ENCODE measurements at regions of chr22 and their contacts with region 1.

Region 1: GRCh38 chr22:39528681-39529486 is 3.7 kb downstream of the RPS19BP1 start:
- DNase-seq: peak; percentile 84 to 97 (median 92)
- ATAC-seq: peak; percentile 55 to 75 (median 63)
- H3K4me3 ChIP-seq: peak overlapping the region in 1 of 4 donors; percentile 29
- H3K27ac ChIP-seq: peak overlapping the region in 1 of 4 donors; percentile 34
- H3K4me1 ChIP-seq: peaks cover 20 to 40% (median 25%) of the 10 kb centered on the region in 3 donors
- H3K27me3 ChIP-seq: no peaks in the 10 kb centered on the region
- CTCF ChIP-seq: peak; percentile 86 to 96 (median 89)

Region 2: GRCh38 chr22:39471381-39472141 is 57.3 kb before region 1 on chr22:
- intact Hi-C with region 1: no loop called
- DNase-seq: no peak
- ATAC-seq: peak in 3 of 4 donors; percentile 20 to 39 (median 31)
- H3K4me3 ChIP-seq: no peak overlapping the region
- H3K27ac ChIP-seq: peak overlapping the region in 2 of 4 donors; percentile 28 to 53
- H3K4me1 ChIP-seq: peaks cover 6 to 21% (median 11%) of the 10 kb centered on the region in 3 donors
- H3K27me3 ChIP-seq: no peaks in the 10 kb centered on the region
- CTCF ChIP-seq: no peak

Region 3: GRCh38 chr22:39490135-39490798 is 38.6 kb before region 1 on chr22:
- intact Hi-C with region 1: loop called in 1 of 3 experiments (anchors 5 kb)
- DNase-seq: peak in 4 of 6 donors; percentile 63 to 73 (median 70)
- ATAC-seq: peak; percentile 85 to 93 (median 91)
- H3K4me3 ChIP-seq: no peak overlapping the region
- H3K27ac ChIP-seq: no peak overlapping the region
- H3K4me1 ChIP-seq: no peaks in the 10 kb centered on the region
- H3K27me3 ChIP-seq: no peaks in the 10 kb centered on the region
- CTCF ChIP-seq: no peak

Region 4: GRCh38 chr22:39664485-39665200 is 135.8 kb after region 1 on chr22:
- intact Hi-C with region 1: no loop called
- DNase-seq: peak in 4 of 6 donors; percentile 10 to 53 (median 29)
- ATAC-seq: peak; percentile 22 to 83 (median 33)
- H3K4me3 ChIP-seq: no peak overlapping the region
- H3K27ac ChIP-seq: no peak overlapping the region
- H3K4me1 ChIP-seq: no peaks in the 10 kb centered on the region
- H3K27me3 ChIP-seq: peaks cover 0 to 23% (median 1%) of the 10 kb centered on the region in 4 donors
- CTCF ChIP-seq: no peak

Measured in pancreas (tissue), 10 donors.